ENCODE measurements at regions of chr10 and their contacts with region 1.

Region 1: GRCh38 chr10:22648547-22648961 is 65.8 kb downstream of the PIP4K2A start:
- DNase-seq: no peak
- H3K4me3 Mint-ChIP-seq: peak overlapping the region; percentile 66
- H3K27ac Mint-ChIP-seq: peak overlapping the region; percentile 91
- H3K4me1 Mint-ChIP-seq: peaks cover 91% of the 10 kb centered on the region
- H3K27me3 Mint-ChIP-seq: no peaks in the 10 kb centered on the region

Region 2: GRCh38 chr10:22573820-22574569 is 74.6 kb before region 1 on chr10:
- CTCF ChIA-PET with region 1: interaction called, 10 read pairs
- POLR2A ChIA-PET with region 1: no interaction called
- DNase-seq: peak; percentile 38
- H3K4me3 Mint-ChIP-seq: no peak overlapping the region
- H3K27ac Mint-ChIP-seq: peak overlapping the region; percentile 64
- H3K4me1 Mint-ChIP-seq: peaks cover 46% of the 10 kb centered on the region
- H3K27me3 Mint-ChIP-seq: no peaks in the 10 kb centered on the region

Region 3: GRCh38 chr10:22635650-22636049 is 12.9 kb before region 1 on chr10:
- CTCF ChIA-PET with region 1: interaction called, 4 read pairs
- POLR2A ChIA-PET with region 1: interaction called, 95 read pairs
- DNase-seq: no peak
- H3K4me3 Mint-ChIP-seq: no peak overlapping the region
- H3K27ac Mint-ChIP-seq: peak overlapping the region; percentile 69
- H3K4me1 Mint-ChIP-seq: peaks cover 75% of the 10 kb centered on the region
- H3K27me3 Mint-ChIP-seq: no peaks in the 10 kb centered on the region

Region 4: GRCh38 chr10:22779331-22780019 is 130.9 kb after region 1 on chr10:
- CTCF ChIA-PET with region 1: no interaction called
- POLR2A ChIA-PET with region 1: no interaction called
- DNase-seq: no peak
- H3K4me3 Mint-ChIP-seq: no peak overlapping the region
- H3K27ac Mint-ChIP-seq: no peak overlapping the region
- H3K4me1 Mint-ChIP-seq: no peaks in the 10 kb centered on the region
- H3K27me3 Mint-ChIP-seq: no peaks in the 10 kb centered on the region

Measured in activated CD4-positive, alpha-beta memory T cell treated with anti-CD3 and anti-CD28 coated beads, Interleukin-2, amount 10 ng/mL, durations not matched to agents 7 days and 5 days (primary cell).